HCT116 (cell line): ENCODE measurements at regions of chr9 and their contacts with region 1.

Region 1: GRCh38 chr9:76987594-76988200 is 31.8 kb upstream of the FOXB2 start:
- DNase-seq: peak; percentile 48
- ATAC-seq: peak; percentile 90
- H3K4me3 ChIP-seq: no peak overlapping the region
- H3K27ac ChIP-seq: no peak overlapping the region
- H3K4me1 ChIP-seq: no peaks in the 10 kb centered on the region
- H3K27me3 ChIP-seq: peaks cover 23% of the 10 kb centered on the region
- CTCF ChIP-seq: peak; percentile 64 to 80 (median 72)
- POLR2A ChIP-seq: no peak
- RAD21 ChIP-seq: peak; percentile 90

Region 2: GRCh38 chr9:76756268-76756640 is 231.4 kb before region 1 on chr9:
- CTCF ChIA-PET with region 1: interaction called, 3 read pairs
- POLR2A ChIA-PET with region 1: no interaction called
- RAD21 ChIA-PET with region 1: no interaction called
- intact Hi-C with region 1: loop called (anchors 1 kb)
- DNase-seq: no peak
- ATAC-seq: peak; percentile 71; the same call in 1 of the 2 replicates
- H3K4me3 ChIP-seq: no peak overlapping the region
- H3K27ac ChIP-seq: no peak overlapping the region
- H3K4me1 ChIP-seq: no peaks in the 10 kb centered on the region
- H3K27me3 ChIP-seq: no peaks in the 10 kb centered on the region; the same call in 1 of the 2 replicates
- CTCF ChIP-seq: peak; percentile 23 to 33 (median 23); a peak in 4 of 6 replicates
- POLR2A ChIP-seq: no peak
- RAD21 ChIP-seq: peak; percentile 46

Region 3: GRCh38 chr9:77210116-77210515 is 222.4 kb after region 1 on chr9:
- CTCF ChIA-PET with region 1: no interaction called
- POLR2A ChIA-PET with region 1: no interaction called
- RAD21 ChIA-PET with region 1: no interaction called
- intact Hi-C with region 1: no loop called
- DNase-seq: no peak
- ATAC-seq: no peak
- H3K4me3 ChIP-seq: no peak overlapping the region
- H3K27ac ChIP-seq: no peak overlapping the region
- H3K4me1 ChIP-seq: peaks cover 0 to 9% of the 10 kb centered on the region in 2 experiments; a peak in 1 of 4 replicates
- H3K27me3 ChIP-seq: no peaks in the 10 kb centered on the region
- CTCF ChIP-seq: no peak
- POLR2A ChIP-seq: no peak
- RAD21 ChIP-seq: no peak